Aorta (tissue), 5 donors: ENCODE measurements at regions of chr21 and their contacts with region 1.

Region 1: DNA sequence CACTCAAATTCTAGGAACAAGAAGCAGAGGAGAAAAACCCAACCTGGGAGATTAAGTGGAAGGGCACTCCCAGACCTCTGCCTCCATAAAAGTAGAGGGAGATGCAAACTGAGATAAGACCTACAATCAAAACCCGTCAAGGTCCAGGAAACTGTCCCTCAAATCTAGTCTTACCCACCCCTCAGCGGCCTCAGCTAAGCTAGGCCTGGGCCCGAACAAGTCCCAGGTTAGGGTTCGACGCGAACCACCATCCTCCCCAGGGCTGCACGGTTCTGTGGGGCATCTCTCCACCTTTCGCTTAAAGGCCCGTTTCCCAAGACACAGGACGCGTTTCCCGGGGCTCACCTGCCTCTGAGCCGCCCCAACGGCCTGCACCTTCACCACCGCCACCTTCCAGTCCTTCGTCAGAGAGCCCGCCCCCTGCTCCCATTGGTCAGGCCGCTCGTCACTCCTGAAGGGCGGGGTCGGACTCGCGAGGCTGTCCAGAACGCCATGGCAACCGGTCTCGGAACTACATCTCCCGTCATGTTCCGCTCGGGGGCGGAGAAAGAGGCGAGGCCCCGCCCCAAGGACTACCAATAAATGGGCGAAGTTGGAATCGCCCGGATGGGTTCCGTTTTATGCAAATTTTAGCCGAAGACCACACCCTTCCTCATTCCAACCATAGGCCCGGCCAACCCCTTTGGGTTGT is at the start of gene CRYZL1:
- DNase-seq: peak; percentile 100
- ATAC-seq: peak; percentile 95
- H3K4me3 ChIP-seq: peak within 1 kb of the TSS; percentile 58 to 94
- H3K27ac ChIP-seq: peak within 1 kb of the TSS; percentile 59 to 75
- H3K4me1 ChIP-seq: peaks cover 0 to 4% of the 10 kb centered on the region in 2 donors
- H3K27me3 ChIP-seq: no peaks in the 10 kb centered on the region
- total RNA-seq, gene CRYZL1: 49.4 to 65.2 TPM

Region 2: GRCh38 chr21:33588485-33589335 is 52.8 kb before region 1 on chr21 and contains the start of gene DONSON:
- intact Hi-C with region 1: loop called in 1 of 2 experiments (anchors 2 kb)
- DNase-seq: peak; percentile 92 to 97
- ATAC-seq: peak; percentile 96
- H3K4me3 ChIP-seq: peak within 1 kb of the TSS; percentile 89
- H3K27ac ChIP-seq: peak within 1 kb of the TSS; percentile 47 to 82
- H3K4me1 ChIP-seq: no peaks in the 10 kb centered on the region
- H3K27me3 ChIP-seq: no peaks in the 10 kb centered on the region
- total RNA-seq, gene DONSON: 8.5 to 10.9 TPM

Region 3: DNA sequence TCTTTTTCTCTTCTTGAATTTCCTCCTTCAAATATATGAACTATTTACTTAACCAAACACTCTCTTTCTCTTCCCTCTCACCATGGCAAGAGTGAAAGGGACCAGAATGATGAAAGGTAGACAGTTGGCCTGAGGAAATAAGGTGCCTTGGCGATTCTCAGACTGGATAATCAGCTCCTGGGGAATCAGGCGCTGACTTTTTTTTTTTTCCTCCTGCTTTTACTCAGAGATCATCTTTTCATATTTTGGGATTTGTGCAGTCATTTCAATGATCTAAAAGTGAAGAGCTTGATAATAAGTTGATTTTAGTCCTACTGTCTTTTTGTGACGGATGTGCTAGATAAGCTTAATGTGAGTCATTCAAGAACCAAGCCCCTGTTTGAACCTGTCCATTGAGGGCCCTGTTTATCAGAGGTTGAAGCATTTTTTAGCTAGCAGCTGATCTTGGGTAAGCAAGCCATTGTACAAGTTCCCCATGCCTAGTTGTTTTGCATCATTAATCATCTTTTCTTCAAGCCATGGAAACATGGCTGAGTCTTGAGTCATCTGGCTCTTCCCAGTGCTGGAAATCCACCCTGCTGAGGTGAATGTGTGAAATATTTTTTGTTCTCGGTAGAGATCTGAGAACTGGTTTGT is 41.6 kb after region 1 on chr21:
- intact Hi-C with region 1: loop called in 1 of 2 experiments (anchors 5 kb)
- DNase-seq: no peak
- ATAC-seq: peak; percentile 52
- H3K4me3 ChIP-seq: no peak overlapping the region
- H3K27ac ChIP-seq: peak overlapping the region in 1 of 2 donors; percentile 67
- H3K4me1 ChIP-seq: peaks cover 0 to 13% of the 10 kb centered on the region in 2 donors
- H3K27me3 ChIP-seq: no peaks in the 10 kb centered on the region

Region 4: GRCh38 chr21:33751120-33751519 is 109.6 kb after region 1 on chr21:
- intact Hi-C with region 1: loop called in 1 of 2 experiments (anchors 10 kb)
- DNase-seq: no peak
- ATAC-seq: no peak
- H3K4me3 ChIP-seq: no peak overlapping the region
- H3K27ac ChIP-seq: no peak overlapping the region
- H3K4me1 ChIP-seq: peaks cover 0 to 3% of the 10 kb centered on the region in 2 donors
- H3K27me3 ChIP-seq: no peaks in the 10 kb centered on the region

Region 5: DNA sequence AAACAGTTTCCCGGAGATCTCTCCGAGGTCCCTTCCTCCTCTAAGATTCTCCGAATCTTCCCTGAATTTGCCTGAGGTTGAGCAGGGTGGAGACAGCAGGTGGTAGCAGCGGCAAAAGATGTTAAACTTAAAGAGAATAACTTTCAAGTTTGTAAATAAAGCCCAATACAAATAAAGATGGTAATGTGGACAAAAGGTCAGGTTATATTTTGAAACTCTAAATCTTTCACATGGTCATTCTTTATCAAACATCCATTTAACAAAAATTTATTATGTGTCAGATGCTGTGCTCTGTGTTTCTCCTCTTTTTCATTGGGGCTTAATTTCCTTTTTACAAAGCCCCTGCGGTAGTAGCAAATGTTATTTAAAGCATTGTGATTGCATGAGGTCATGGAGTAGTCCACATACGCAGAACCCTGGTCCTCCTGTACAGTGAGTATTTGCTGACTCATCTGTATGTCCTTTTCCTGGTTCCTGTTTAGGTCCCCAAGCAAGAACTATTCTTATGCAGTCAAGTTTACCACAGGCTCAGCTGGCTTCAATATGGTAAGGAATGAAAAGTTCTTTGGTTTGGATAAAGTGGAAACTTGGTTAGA is 120.1 kb after region 1 on chr21:
- intact Hi-C with region 1: loop called (anchors 2 to 10 kb)
- DNase-seq: no peak
- ATAC-seq: peak; percentile 89
- H3K4me3 ChIP-seq: no peak overlapping the region
- H3K27ac ChIP-seq: peak overlapping the region; percentile 19 to 95
- H3K4me1 ChIP-seq: peaks cover 0 to 3% of the 10 kb centered on the region in 2 donors
- H3K27me3 ChIP-seq: no peaks in the 10 kb centered on the region

Region 6: DNA sequence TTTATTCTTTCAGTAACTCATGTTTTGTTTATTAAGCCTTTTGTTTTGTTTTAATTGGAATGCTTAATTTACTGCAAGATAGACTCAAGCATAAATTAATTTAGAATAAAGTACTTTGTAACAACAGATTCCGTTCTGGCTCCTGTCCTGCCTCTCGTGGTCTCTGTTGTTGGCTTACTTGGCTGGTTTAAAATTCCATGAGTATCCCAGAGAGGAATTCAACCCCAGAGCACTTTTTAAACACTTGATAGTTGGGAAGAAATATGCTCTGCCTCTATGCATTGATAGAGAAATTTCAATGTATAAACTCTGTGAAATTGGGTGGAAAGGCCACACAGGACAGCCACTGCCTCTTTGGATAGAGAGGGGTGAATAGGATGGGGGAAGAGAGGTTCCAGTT is 184.4 kb after region 1 on chr21:
- intact Hi-C with region 1: loop called (anchors 10 kb)
- DNase-seq: no peak
- ATAC-seq: peak; percentile 24
- H3K4me3 ChIP-seq: no peak overlapping the region
- H3K27ac ChIP-seq: no peak overlapping the region
- H3K4me1 ChIP-seq: peaks cover 7 to 20% of the 10 kb centered on the region in 2 donors
- H3K27me3 ChIP-seq: no peaks in the 10 kb centered on the region

Region 7: DNA sequence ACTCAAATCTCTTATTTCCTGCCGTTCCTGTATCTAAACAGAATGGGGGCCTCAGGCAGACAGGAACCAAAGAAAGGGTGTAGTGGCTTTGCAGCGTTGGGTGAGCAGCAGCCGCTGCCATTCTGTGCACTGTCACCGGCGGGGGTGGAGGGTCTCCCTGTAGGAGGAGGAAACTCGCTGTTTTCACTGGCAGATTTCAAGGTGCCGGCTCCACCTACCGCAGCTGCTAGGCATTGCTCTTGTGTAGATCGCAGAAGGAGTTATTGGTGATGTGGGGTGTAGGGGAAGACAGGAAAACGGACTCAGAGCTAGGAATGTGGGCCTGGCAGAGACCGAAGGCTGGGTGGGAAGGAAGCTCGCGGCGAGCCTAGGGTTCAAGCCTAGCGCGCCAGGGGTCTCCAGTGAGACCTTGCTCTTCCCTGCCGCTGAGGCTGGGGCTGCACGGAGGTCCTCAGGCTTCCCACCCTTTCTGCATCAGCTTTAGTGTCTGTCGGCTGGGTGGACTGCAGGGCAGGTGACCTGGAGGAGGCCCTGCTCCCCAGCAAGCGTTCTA is 253.3 kb after region 1 on chr21:
- intact Hi-C with region 1: loop called (anchors 1 to 5 kb)
- DNase-seq: peak; percentile 90 to 92
- ATAC-seq: peak; percentile 87
- H3K4me3 ChIP-seq: peak overlapping the region in 1 of 2 donors; percentile 24
- H3K27ac ChIP-seq: no peak overlapping the region
- H3K4me1 ChIP-seq: peaks cover 0 to 4% of the 10 kb centered on the region in 2 donors
- H3K27me3 ChIP-seq: no peaks in the 10 kb centered on the region

Region 8: GRCh38 chr21:35603494-35603893 is 1962.0 kb after region 1 on chr21:
- intact Hi-C with region 1: no loop called
- DNase-seq: no peak
- ATAC-seq: no peak
- H3K4me3 ChIP-seq: no peak overlapping the region
- H3K27ac ChIP-seq: no peak overlapping the region
- H3K4me1 ChIP-seq: no peaks in the 10 kb centered on the region
- H3K27me3 ChIP-seq: no peaks in the 10 kb centered on the region